Dendritic cell treated with granulocyte-macrophage colony-stimulating factor and Interleukin-4, amounts not matched to agents 40 ng/mL and 50 ng/mL, for 4 days (primary cell): ENCODE measurements at regions of chr6 and their contacts with region 1.

Region 1: DNA sequence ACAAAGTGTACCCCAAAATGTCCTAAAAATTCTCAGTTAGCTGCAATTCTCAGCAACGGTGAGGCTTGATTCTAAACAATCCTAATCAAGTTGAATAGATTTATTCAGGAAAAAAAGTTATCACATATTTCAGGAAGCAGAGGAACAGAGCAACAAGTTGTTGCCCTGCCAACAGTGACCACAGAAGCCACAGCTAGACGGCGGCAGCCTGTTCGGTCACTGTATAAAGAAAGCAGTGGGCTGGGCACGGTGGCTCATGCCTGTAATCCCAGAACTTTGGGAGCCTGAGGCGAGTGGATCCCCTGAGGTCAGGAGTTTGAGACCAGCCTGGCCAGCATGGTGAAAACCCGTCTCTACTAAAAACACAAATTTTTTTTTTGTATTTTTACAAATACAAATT is 171.2 kb upstream of the BMP5 start:
- H3K4me3 Mint-ChIP-seq: no peak overlapping the region
- H3K27ac Mint-ChIP-seq: no peak overlapping the region
- H3K4me1 Mint-ChIP-seq: peaks cover 21% of the 10 kb centered on the region
- H3K27me3 Mint-ChIP-seq: peaks cover 5% of the 10 kb centered on the region

Region 2: GRCh38 chr6:56101141-56101553 is 54.6 kb after region 1 on chr6:
- intact Hi-C with region 1: loop called (anchors 5 kb)
- H3K4me3 Mint-ChIP-seq: no peak overlapping the region
- H3K27ac Mint-ChIP-seq: peak overlapping the region; percentile 27
- H3K4me1 Mint-ChIP-seq: peaks cover 20% of the 10 kb centered on the region
- H3K27me3 Mint-ChIP-seq: no peaks in the 10 kb centered on the region